GM12878 (cell line): ENCODE measurements at regions of chr12 and their contacts with region 1.

Region 1: GRCh38 chr12:3885277-3886094 is 12.3 kb upstream of the PARP11 start:
- DNase-seq: no peak
- ATAC-seq: peak; percentile 36; the same call in 2 of the 3 replicates
- H3K4me3 ChIP-seq: 0 out of 2 replicates have a peak overlapping the region, but pooled peaks have one; percentile 5
- H3K27ac ChIP-seq: no peak overlapping the region
- H3K4me1 ChIP-seq: no peaks in the 10 kb centered on the region
- H3K27me3 ChIP-seq: no peaks in the 10 kb centered on the region; a peak in 1 of 4 replicates
- CTCF ChIP-seq: peak; percentile 74 to 82 (median 80)
- EP300 ChIP-seq: no peak
- POLR2A ChIP-seq: no peak
- RAD21 ChIP-seq: peak; percentile 91

Region 2: GRCh38 chr12:3732902-3733301 is 152.6 kb before region 1 on chr12:
- CTCF ChIA-PET with region 1: no interaction called
- POLR2A ChIA-PET with region 1: no interaction called
- RAD21 ChIA-PET with region 1: no interaction called
- SMC1A ChIA-PET with region 1: no interaction called
- in situ Hi-C with region 1: no loop called
- intact Hi-C with region 1: no loop called
- DNase-seq: no peak
- ATAC-seq: no peak
- H3K4me3 ChIP-seq: no peak overlapping the region
- H3K27ac ChIP-seq: no peak overlapping the region
- H3K4me1 ChIP-seq: peaks cover 8% of the 10 kb centered on the region
- H3K27me3 ChIP-seq: no peaks in the 10 kb centered on the region
- CTCF ChIP-seq: no peak
- EP300 ChIP-seq: no peak
- POLR2A ChIP-seq: no peak
- RAD21 ChIP-seq: no peak

Region 3: DNA sequence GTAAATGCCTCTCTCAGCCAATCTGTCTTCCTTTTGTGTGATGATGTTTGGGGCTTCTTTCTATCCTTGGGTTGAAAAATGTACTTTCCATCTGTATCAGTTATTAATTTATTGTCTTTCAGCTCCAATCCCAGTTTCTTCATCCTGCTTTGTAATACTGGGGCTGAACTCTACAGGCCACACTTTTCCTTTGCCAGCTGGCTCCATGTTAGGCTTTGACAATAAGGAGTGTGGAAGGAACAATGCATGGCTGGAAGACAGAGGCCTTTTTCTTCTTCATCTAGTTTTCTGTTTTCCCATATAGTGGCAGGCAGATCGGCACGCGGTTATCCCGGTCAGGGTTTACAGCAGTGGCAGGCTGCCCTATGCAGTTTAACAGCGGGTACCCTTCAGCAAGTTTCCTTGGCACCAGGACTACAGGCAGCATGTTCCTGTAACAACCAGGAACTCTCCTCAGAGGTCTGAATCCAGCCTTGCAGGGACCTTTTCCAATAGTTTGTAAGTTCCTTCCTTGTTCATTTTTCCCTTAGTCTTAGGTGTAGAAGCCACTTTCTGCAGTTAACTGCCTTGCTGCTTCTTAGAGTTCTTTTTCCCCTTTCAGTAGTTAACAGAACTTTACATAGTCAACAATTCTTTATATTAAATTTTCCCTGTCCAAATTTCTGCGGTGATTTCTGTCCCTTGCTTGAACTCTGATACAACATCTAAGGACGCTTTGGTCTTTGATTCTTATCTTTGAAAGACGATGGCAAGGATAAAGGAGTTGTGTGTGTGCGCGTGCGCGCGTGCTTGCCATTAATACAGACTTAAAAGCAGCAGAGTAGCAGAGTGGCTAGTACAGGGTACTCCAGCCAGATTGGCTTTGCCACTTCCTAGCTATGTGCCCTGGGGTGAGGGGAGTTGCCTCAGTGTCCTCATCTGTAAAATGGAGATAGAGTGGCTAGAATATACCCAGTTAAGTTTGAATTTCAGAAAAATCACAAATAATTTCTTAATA is 93.9 kb before region 1 on chr12:
- CTCF ChIA-PET with region 1: no interaction called
- POLR2A ChIA-PET with region 1: no interaction called
- RAD21 ChIA-PET with region 1: no interaction called
- SMC1A ChIA-PET with region 1: no interaction called
- in situ Hi-C with region 1: no loop called
- intact Hi-C with region 1: no loop called
- DNase-seq: no peak
- ATAC-seq: no peak
- H3K4me3 ChIP-seq: no peak overlapping the region
- H3K27ac ChIP-seq: no peak overlapping the region
- H3K4me1 ChIP-seq: no peaks in the 10 kb centered on the region
- H3K27me3 ChIP-seq: no peaks in the 10 kb centered on the region
- CTCF ChIP-seq: no peak
- EP300 ChIP-seq: no peak
- POLR2A ChIP-seq: no peak
- RAD21 ChIP-seq: no peak

Region 4: DNA sequence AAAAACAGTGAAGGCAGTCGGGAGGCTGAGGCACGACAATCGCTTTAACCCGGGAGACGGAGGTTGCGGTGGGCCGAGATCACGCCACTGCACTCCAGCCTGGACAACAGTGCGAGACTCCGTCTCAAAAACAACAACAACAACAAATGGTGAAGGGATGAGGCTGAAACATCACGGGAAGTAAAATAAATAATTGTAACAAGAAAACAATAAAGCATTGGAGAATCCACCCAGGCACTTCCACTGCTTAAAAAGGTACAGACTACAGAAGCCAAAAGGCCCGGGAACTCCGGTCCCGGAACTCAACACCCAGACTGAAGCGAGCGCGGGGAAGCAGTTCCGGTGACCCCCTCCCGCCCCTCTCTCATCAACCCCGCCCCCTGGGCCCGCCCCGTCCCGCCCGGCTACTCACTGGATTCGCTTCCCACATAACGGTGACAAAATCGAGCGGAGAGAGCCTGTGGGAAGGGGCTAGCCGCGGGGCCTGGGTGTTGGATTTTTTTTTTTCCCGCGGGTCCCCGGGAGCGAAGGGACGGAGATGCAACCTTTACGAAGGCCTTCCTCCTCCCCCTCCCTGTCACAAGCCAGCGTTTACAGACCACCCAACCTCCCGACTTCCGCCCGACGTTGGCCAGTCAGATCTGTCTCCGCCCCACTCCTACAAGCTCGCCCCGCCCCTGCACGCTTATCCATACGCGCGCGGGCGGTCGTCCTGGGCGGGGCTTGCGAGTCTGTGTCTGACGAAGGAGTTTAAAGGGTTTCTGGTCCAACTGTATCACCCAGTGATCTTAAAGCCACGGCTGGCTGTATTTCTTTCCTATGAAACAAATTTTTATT is 12.5 kb before region 1 on chr12 and contains the start of gene PARP11:
- CTCF ChIA-PET with region 1: interaction called, 20 read pairs
- POLR2A ChIA-PET with region 1: no interaction called
- RAD21 ChIA-PET with region 1: interaction called, 7 read pairs
- SMC1A ChIA-PET with region 1: interaction called, 20 read pairs
- in situ Hi-C with region 1: no loop called
- intact Hi-C with region 1: no loop called
- DNase-seq: peak; percentile 87
- ATAC-seq: peak; percentile 98
- H3K4me3 ChIP-seq: peak within 1 kb of the TSS; percentile 91
- H3K27ac ChIP-seq: peak within 1 kb of the TSS; percentile 92
- H3K4me1 ChIP-seq: peaks cover 13% of the 10 kb centered on the region
- H3K27me3 ChIP-seq: no peaks in the 10 kb centered on the region
- CTCF ChIP-seq: no peak
- EP300 ChIP-seq: 0 out of 4 replicates have a peak, but pooled peaks of 1 of the 2 experiments have one; percentile 19
- POLR2A ChIP-seq: peak; percentile 77
- RAD21 ChIP-seq: no peak
- polyA plus RNA-seq, gene PARP11: 3.7 to 5.5 TPM

Region 5: DNA sequence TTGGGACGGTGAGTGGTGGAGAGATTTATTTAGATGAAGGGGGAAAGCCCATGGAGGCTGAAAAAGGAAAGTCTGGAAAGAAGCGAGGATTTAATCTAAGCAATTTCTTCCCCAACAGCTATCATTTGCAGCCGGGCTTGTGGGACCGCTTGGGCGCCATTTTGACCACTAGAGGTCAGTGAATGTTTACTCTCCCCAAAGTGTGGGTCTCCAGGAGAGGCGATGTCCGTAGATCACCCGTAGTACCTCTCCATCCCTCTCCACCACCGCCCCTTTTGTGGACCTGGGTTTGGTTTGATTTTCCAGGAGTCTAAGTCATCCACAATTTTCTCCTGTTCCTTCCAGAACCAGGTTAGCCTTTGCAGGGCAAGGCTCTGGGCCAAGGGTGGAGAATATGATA is 79.0 kb after region 1 on chr12:
- CTCF ChIA-PET with region 1: interaction called, 33 read pairs
- POLR2A ChIA-PET with region 1: no interaction called
- RAD21 ChIA-PET with region 1: interaction called, 3 read pairs
- SMC1A ChIA-PET with region 1: interaction called, 7 read pairs
- in situ Hi-C with region 1: no loop called
- intact Hi-C with region 1: loop called (anchors 10 kb)
- DNase-seq: no peak
- ATAC-seq: peak; percentile 91
- H3K4me3 ChIP-seq: no peak overlapping the region
- H3K27ac ChIP-seq: no peak overlapping the region
- H3K4me1 ChIP-seq: no peaks in the 10 kb centered on the region
- H3K27me3 ChIP-seq: peaks cover 0 to 3% of the 10 kb centered on the region in 2 experiments; a peak in 3 of 4 replicates
- CTCF ChIP-seq: peak; percentile 56 to 69 (median 57)
- EP300 ChIP-seq: no peak
- POLR2A ChIP-seq: no peak
- RAD21 ChIP-seq: peak; percentile 42; the same call in 1 of the 2 replicates

Region 6: GRCh38 chr12:4037747-4038312 is 152.3 kb after region 1 on chr12:
- CTCF ChIA-PET with region 1: interaction called, 18 read pairs
- POLR2A ChIA-PET with region 1: no interaction called
- RAD21 ChIA-PET with region 1: interaction called, 5 read pairs
- SMC1A ChIA-PET with region 1: interaction called, 21 read pairs
- in situ Hi-C with region 1: no loop called
- intact Hi-C with region 1: no loop called
- DNase-seq: no peak
- ATAC-seq: no peak
- H3K4me3 ChIP-seq: no peak overlapping the region
- H3K27ac ChIP-seq: no peak overlapping the region
- H3K4me1 ChIP-seq: no peaks in the 10 kb centered on the region
- H3K27me3 ChIP-seq: peaks cover 0 to 3% of the 10 kb centered on the region in 2 experiments; a peak in 2 of 4 replicates
- CTCF ChIP-seq: peak; percentile 12 to 40 (median 31); a peak in 3 of 6 replicates
- EP300 ChIP-seq: no peak
- POLR2A ChIP-seq: no peak
- RAD21 ChIP-seq: peak; percentile 46

Region 7: DNA sequence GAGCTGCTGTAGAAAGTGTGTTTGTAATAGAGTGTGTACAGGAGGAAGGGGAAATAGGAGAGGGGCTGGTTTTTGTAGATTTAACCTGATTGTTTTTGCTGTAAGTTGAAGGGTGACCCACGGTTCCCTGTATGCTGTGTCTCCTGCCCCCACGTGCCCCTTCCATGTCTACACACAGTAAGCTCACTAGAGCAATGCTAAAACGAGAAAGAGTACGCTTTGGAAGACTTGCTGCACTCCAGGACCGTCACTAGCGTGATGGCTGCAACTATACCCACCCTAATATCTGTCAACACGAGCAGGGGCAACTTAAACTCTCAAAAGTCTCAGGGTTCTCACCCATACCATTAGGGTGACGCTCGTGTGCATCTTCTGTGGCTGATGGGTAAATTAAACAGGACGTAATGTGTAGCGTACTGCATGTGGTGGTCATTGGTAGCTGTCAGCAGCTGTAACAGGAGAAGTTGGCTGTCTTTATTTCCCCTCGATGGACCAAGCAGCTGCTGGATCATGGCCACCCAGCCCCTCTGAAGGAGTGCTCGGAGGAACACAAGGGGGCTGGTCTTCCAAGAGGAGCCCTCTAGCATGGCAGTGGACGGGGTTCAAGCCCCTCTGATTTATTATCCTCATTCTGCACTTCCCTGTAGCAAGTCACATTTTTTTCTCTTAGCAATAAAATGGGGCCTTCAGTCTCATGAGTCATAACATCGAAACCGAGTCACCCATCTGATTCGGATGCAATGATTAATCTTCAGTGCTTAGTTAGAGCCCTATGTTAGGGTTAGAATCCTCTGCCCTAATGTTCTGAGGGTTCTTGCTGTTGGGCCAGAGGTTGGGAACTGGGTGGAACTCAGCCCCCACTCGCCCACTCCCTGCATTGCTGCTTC is 402.1 kb after region 1 on chr12:
- CTCF ChIA-PET with region 1: interaction called, 13 read pairs
- POLR2A ChIA-PET with region 1: no interaction called
- RAD21 ChIA-PET with region 1: no interaction called
- SMC1A ChIA-PET with region 1: no interaction called
- in situ Hi-C with region 1: no loop called
- intact Hi-C with region 1: no loop called
- DNase-seq: no peak
- ATAC-seq: no peak
- H3K4me3 ChIP-seq: no peak overlapping the region
- H3K27ac ChIP-seq: no peak overlapping the region
- H3K4me1 ChIP-seq: peaks cover 12% of the 10 kb centered on the region
- H3K27me3 ChIP-seq: no peaks in the 10 kb centered on the region
- CTCF ChIP-seq: no peak
- EP300 ChIP-seq: no peak
- POLR2A ChIP-seq: no peak; the same call in 1 of the 2 replicates
- RAD21 ChIP-seq: no peak

Region 8: DNA sequence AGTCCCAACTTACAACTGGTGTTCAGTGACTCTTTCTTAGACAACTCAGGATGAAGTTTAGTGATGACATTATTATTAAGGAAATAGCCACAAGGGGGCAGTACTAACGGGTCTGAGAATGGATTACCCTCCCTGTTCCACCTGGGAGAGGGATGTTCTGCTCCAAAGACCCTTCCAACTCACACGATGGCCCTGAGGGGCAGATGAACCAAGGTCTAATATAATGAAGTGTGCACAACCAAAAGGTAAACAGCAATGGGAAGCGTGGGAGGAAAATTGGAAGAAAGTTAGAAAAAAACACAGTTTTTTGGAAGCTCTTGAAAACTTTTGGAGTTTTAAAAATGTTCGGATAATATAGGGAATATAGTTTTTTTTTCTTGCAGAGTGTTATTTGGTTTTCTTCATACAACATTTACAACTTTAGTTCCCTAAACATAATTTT is 536.1 kb after region 1 on chr12:
- CTCF ChIA-PET with region 1: interaction called, 6 read pairs
- POLR2A ChIA-PET with region 1: no interaction called
- RAD21 ChIA-PET with region 1: interaction called, 6 read pairs
- SMC1A ChIA-PET with region 1: interaction called, 4 read pairs
- in situ Hi-C with region 1: no loop called
- intact Hi-C with region 1: loop called (anchors 5 kb)
- DNase-seq: no peak
- ATAC-seq: peak; percentile 69
- H3K4me3 ChIP-seq: no peak overlapping the region
- H3K27ac ChIP-seq: no peak overlapping the region
- H3K4me1 ChIP-seq: no peaks in the 10 kb centered on the region
- H3K27me3 ChIP-seq: peaks cover 0 to 3% of the 10 kb centered on the region in 2 experiments; a peak in 3 of 4 replicates
- CTCF ChIP-seq: peak; percentile 51 to 62 (median 57); a peak in 5 of 6 replicates
- EP300 ChIP-seq: no peak
- POLR2A ChIP-seq: no peak
- RAD21 ChIP-seq: peak; percentile 59

Region 9: DNA sequence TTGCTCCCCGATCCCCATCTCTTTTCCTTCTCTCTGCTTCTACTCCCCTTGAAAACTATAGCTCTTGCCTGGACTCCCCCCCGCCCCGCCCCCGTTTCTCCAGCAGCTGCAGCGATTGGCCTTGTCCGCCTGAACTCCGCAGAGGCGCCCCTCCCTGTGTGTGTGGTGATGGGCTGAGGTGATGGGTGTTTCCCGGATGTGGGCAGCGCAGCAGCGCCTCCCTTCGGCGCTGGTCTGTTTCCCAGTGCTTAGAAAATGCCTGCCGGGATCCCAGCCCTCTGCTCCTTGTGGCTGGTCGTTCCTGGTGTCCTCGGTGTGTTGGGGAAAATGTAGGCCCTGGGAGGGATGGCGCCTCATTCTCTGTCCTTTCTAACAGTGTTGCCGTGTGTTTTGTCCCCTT is 878.1 kb after region 1 on chr12:
- CTCF ChIA-PET with region 1: interaction called, 48 read pairs
- POLR2A ChIA-PET with region 1: no interaction called
- RAD21 ChIA-PET with region 1: interaction called, 5 read pairs
- SMC1A ChIA-PET with region 1: interaction called, 14 read pairs
- in situ Hi-C with region 1: no loop called
- intact Hi-C with region 1: loop called (anchors 5 kb)
- DNase-seq: no peak
- ATAC-seq: no peak
- H3K4me3 ChIP-seq: no peak overlapping the region
- H3K27ac ChIP-seq: no peak overlapping the region
- H3K4me1 ChIP-seq: no peaks in the 10 kb centered on the region
- H3K27me3 ChIP-seq: no peaks in the 10 kb centered on the region
- CTCF ChIP-seq: no peak
- EP300 ChIP-seq: no peak
- POLR2A ChIP-seq: no peak
- RAD21 ChIP-seq: no peak